Adrenal gland (tissue), 19 donors: ENCODE measurements at regions of chr2 and their contacts with region 1.

Region 1: DNA sequence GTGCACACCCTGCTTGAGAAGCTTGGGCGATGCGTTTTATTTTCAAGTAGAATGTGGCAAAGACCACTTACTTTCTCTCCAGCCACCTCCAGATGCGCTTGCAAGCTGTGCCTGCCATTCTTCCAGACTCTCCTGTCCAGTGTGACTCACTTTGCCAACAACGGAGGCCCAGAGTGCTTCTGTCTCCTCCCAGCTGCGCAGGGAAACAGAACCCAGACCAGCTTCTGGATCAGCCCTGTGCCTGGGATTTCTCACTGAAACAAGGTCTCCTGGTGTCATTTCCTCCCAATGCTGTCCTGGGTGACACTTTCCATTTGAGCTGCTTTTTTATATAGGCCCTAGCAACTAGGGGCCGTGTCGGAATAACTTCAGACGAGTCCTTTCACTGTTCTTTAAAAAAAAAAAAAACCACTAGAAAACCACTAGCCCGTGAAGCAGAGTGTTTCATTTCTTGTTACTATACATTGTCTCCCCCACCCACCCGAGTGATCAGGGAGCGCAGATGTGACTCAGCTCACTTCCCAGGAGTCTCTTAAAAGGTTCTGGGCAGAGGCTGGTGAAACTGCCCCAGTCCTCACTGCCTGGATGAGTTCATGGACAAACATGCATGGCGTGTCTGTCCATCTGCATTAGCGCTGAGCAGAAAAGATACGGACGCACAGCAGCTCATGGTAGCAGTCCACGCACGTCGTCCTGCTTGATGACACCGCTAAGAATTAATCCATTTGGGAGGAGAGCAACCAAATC is 25.3 kb upstream of the RPL31 start:
- DNase-seq: no peak
- H3K4me3 ChIP-seq: no peak overlapping the region
- H3K27ac ChIP-seq: no peak overlapping the region
- H3K4me1 ChIP-seq: no peaks in the 10 kb centered on the region
- H3K27me3 ChIP-seq: no peaks in the 10 kb centered on the region
- CTCF ChIP-seq: no peak
- POLR2A ChIP-seq: no peak

Region 2: GRCh38 chr2:100818606-100819369 is 158.0 kb before region 1 on chr2:
- intact Hi-C with region 1: loop called (anchors 5 to 10 kb)
- DNase-seq: peak; percentile 79 to 90 (median 87)
- H3K4me3 ChIP-seq: peak overlapping the region in 2 of 4 donors; percentile 59 to 89
- H3K27ac ChIP-seq: peak overlapping the region in 4 of 5 donors; percentile 74 to 91 (median 88)
- H3K4me1 ChIP-seq: peaks cover 6 to 33% of the 10 kb centered on the region in 2 donors
- H3K27me3 ChIP-seq: no peaks in the 10 kb centered on the region
- CTCF ChIP-seq: peak in 4 of 6 experiments; percentile 7 to 43 (median 13)
- POLR2A ChIP-seq: peak in 1 of 2 donors; percentile 48

Region 3: GRCh38 chr2:100893392-100894089 is 83.3 kb before region 1 on chr2:
- intact Hi-C with region 1: loop called in 1 of 2 experiments (anchors 10 kb)
- DNase-seq: peak; percentile 40 to 68 (median 46)
- H3K4me3 ChIP-seq: no peak overlapping the region
- H3K27ac ChIP-seq: peak overlapping the region in 1 of 5 donors; percentile 41
- H3K4me1 ChIP-seq: peaks cover 0 to 30% of the 10 kb centered on the region in 2 donors
- H3K27me3 ChIP-seq: no peaks in the 10 kb centered on the region
- CTCF ChIP-seq: no peak
- POLR2A ChIP-seq: no peak